ENCODE measurements at regions of chr7 and their contacts with region 1.

Region 1: DNA sequence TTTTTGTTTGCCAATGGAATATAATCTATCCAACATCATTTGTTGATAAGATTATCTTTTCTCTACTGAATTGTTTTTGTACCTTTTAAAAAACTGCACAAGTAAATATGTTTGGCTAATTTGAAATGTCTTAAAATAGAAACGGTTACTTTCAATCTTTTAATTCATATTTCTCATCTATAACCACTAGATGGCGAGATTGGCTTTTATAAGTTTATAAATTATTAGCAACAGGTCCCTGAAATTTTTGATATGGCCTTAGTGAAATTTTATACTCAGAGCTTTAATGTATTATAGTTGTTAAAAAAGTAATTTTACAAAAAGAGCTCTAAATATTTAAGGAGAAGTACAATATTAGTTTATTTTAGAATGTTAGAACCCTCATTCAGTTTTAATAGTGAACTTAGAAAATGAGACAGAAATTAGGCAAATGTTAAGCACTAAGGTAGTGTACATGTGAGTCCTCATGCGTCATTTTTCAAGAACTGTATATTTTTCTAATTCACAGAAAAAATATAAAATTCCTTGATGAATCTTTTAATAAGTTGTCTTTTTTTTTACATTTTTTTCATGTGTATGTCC is 592.5 kb downstream of the ARL4A start:
- ATAC-seq: no peak
- H3K4me3 ChIP-seq: no peak overlapping the region
- H3K27ac ChIP-seq: no peak overlapping the region
- H3K4me1 ChIP-seq: no peaks in the 10 kb centered on the region

Region 2: GRCh38 chr7:13508586-13508985 is 228.6 kb after region 1 on chr7:
- in situ Hi-C with region 1: loop called in 1 of 9 experiments (anchors 25 kb)
- ATAC-seq: peak in 2 of 8 experiments; percentile 13 to 48
- H3K4me3 ChIP-seq: no peak overlapping the region
- H3K27ac ChIP-seq: no peak overlapping the region
- H3K4me1 ChIP-seq: no peaks in the 10 kb centered on the region

Region 3: DNA sequence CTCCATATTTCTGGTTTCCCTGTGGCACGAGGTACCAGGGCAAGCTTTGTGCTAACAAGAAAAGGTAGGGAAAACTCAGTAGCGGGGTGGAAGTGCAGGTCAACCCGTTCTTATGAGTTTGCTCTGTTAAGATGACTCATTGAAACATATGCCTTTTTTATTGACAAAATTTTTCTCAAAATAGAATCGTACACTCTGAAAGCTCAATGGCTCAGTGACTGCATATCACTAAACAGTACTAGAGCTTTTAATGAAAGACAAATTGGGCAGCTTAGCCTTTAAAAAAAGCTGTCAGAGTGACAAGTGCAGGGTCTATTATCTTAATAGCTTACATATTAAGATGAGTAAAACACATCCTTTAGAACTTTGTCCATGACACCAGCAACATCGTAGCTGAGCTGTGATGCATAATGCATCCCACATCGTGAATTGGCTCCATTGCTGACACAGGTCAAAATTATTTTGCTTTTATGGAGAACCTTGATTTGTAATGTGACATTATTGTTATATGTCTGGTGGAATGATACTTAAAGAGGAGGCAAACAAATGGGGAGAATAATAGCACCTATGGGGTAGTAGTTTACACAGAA is 445.1 kb after region 1 on chr7:
- in situ Hi-C with region 1: loop called in 3 of 9 experiments (anchors 25 kb)
- ATAC-seq: peak in 5 of 8 experiments; percentile 36 to 83 (median 61)
- H3K4me3 ChIP-seq: no peak overlapping the region
- H3K27ac ChIP-seq: peak overlapping the region in 1 of 2 donors; percentile 9
- H3K4me1 ChIP-seq: peaks cover 0 to 17% of the 10 kb centered on the region in 2 donors

Region 4: DNA sequence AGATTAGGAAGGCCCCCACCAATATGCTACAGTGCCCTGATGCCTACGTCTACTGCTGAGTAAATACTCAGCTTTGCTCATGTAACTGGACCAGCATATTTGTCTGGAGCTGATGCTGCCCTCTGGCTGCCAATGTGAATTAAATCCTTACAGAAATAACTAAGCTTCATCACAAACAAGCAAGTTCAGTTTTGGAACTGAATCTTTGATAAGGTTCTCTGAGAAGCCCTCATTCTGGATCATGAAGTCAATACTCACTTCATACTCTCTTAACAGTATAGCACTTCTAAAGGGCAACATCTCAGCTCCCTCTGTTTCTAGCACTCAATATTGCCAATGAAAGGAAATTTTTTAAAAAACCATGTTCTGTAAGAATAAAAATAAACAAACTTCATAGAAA is 462.9 kb after region 1 on chr7:
- in situ Hi-C with region 1: loop called in 2 of 9 experiments (anchors 25 kb)
- ATAC-seq: peak in 4 of 8 experiments; percentile 50 to 73 (median 61)
- H3K4me3 ChIP-seq: no peak overlapping the region
- H3K27ac ChIP-seq: no peak overlapping the region
- H3K4me1 ChIP-seq: no peaks in the 10 kb centered on the region

Region 5: DNA sequence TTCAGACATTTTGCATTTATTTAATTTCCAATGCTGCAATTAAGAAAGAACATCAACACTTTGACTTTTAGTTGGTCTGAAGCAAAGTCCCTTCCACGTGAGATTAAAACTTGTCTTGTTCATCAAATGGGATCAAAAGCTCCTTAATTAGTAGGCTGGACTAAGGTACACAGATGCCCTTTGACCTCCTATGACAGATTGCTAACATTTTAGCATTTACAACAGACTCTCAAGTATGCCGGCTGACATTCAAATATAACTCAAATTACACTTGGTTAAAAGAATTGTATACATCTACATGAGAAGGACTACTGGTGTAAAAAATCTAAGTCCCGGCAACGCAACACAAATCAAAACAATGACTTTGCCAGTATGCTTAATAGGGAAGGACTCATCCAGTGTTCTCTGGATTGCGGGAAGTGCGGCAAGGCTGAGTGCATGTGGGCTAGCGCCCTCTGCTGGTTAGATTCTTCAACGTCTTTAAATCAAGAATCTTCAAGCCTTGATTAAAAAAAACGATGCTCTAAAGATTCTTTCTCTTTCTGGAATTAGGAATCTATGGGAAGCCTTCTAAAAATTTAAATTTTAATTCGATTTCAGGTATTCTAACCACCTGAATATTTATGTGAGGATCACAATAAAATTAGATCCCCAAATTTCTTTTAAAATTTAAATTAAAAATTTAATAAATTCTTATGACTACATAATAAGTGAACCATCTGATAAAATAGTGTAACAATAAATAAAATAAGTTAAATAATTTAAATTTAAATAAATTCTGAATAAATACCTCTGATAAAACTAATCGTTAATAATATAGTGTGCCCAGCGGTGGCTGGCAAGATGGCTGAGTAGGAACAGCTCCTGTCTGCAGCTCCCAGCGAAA is 1177.9 kb after region 1 on chr7:
- in situ Hi-C with region 1: loop called in 5 of 9 experiments (anchors 25 kb)
- ATAC-seq: peak; percentile 65 to 92 (median 70)
- H3K4me3 ChIP-seq: no peak overlapping the region
- H3K27ac ChIP-seq: no peak overlapping the region
- H3K4me1 ChIP-seq: no peaks in the 10 kb centered on the region

Region 6: GRCh38 chr7:14691597-14692203 is 1411.8 kb after region 1 on chr7:
- in situ Hi-C with region 1: loop called (anchors 10 to 25 kb)
- ATAC-seq: peak in 1 of 8 experiments; percentile 44
- H3K4me3 ChIP-seq: no peak overlapping the region
- H3K27ac ChIP-seq: no peak overlapping the region
- H3K4me1 ChIP-seq: no peaks in the 10 kb centered on the region

Measured in motor neuron (in vitro differentiated cells).